ENCODE measurements at regions of chr13 and their contacts with region 1.

Region 1: GRCh38 chr13:20828539-20829364 is 55.0 kb upstream of the EEF1AKMT1 start:
- DNase-seq: peak; percentile 47
- H3K4me3 Mint-ChIP-seq: no peak overlapping the region
- H3K27ac Mint-ChIP-seq: no peak overlapping the region
- H3K4me1 Mint-ChIP-seq: peaks cover 6% of the 10 kb centered on the region
- H3K27me3 Mint-ChIP-seq: no peaks in the 10 kb centered on the region

Region 2: GRCh38 chr13:20182231-20182846 is 646.4 kb before region 1 on chr13:
- CTCF ChIA-PET with region 1: interaction called, 3 read pairs
- intact Hi-C with region 1: loop called (anchors 1 kb)
- DNase-seq: peak; percentile 54
- H3K4me3 Mint-ChIP-seq: no peak overlapping the region
- H3K27ac Mint-ChIP-seq: no peak overlapping the region
- H3K4me1 Mint-ChIP-seq: no peaks in the 10 kb centered on the region
- H3K27me3 Mint-ChIP-seq: peaks cover 30% of the 10 kb centered on the region

Region 3: DNA sequence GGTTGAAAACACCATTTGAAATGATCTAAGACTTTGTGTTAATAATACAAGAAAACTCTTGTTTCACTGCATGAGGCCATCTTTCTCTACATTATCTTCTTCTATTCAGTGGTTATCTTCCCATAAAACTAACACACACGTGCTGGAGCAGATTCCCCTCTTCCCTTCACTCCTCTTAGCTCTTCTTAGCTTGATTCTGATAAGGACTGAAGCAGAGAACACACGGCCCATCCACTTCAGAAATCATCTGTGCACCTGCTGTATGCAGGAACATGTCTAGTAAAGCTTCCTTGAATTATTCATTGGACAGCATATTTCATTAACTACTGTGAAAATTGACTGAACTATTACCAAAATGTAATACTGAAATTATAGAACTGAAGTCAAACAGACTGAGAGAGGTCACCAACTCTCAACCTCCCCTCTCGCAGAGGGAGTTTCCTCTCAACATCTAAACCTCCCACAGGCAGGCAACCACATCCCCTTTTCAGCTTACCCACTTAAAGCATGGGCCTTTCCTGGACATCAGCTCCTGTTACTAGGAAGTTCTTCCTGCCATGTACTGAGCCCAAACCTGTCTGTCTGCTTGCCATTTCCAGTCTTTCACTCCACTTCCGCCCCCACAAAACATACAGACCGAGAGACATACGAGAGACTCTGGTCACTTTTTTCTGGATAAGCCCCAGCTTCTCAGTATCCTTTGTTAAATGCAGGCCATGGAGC is 417.0 kb before region 1 on chr13:
- CTCF ChIA-PET with region 1: no interaction called
- intact Hi-C with region 1: loop called (anchors 1 kb)
- DNase-seq: peak; percentile 78
- H3K4me3 Mint-ChIP-seq: no peak overlapping the region
- H3K27ac Mint-ChIP-seq: peak overlapping the region; percentile 50
- H3K4me1 Mint-ChIP-seq: peaks cover 21% of the 10 kb centered on the region
- H3K27me3 Mint-ChIP-seq: no peaks in the 10 kb centered on the region

Region 4: DNA sequence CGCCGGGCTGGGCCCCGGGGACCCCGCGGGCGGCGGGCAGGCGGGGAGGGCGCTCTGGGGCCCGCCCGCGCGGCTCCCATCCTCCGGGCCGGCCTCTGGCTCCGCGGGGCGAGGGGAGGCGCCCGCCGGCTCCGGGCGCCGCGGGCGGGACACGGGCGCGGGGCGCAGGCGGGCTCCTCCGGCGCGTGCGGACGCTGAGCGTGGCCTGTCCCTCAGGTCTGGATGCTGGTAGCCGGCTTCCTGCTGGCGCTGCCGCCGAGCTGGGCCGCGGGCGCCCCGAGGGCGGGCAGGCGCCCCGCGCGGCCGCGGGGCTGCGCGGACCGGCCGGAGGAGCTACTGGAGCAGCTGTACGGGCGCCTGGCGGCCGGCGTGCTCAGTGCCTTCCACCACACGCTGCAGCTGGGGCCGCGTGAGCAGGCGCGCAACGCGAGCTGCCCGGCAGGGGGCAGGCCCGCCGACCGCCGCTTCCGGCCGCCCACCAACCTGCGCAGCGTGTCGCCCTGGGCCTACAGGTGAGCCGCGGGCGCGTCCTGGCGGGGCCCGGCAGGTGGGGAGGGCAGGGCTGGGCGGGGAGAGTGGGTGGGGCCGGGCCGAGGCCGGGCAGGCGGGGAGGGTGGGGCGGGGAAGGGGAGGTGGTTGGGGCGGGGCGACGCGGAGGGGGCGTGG is 124.8 kb before region 1 on chr13:
- CTCF ChIA-PET with region 1: interaction called, 8 read pairs
- intact Hi-C with region 1: loop called (anchors 1 kb)
- DNase-seq: peak; percentile 72
- H3K4me3 Mint-ChIP-seq: no peak overlapping the region
- H3K27ac Mint-ChIP-seq: no peak overlapping the region
- H3K4me1 Mint-ChIP-seq: peaks cover 5% of the 10 kb centered on the region
- H3K27me3 Mint-ChIP-seq: peaks cover 13% of the 10 kb centered on the region

Region 5: DNA sequence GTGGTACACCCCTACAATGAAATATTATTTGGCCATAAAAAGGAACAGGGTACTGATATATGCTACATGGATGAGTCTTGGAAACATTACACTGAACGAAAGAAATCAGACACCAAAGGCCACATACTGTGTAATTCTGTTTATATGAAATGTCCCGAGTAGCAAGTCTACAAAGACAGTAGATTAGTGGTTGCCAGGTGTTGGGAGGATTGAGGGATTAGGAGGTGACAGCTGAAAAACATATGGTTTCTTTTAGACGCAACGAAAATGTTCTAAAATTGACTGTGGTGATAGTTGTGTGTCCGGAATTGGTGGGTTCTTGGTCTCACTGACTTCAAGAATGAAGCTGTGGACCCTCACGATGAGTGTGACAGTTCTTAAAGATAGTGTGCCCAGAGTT is 90.1 kb before region 1 on chr13:
- CTCF ChIA-PET with region 1: no interaction called
- intact Hi-C with region 1: no loop called
- DNase-seq: no peak
- H3K4me3 Mint-ChIP-seq: no peak overlapping the region
- H3K27ac Mint-ChIP-seq: no peak overlapping the region
- H3K4me1 Mint-ChIP-seq: no peaks in the 10 kb centered on the region
- H3K27me3 Mint-ChIP-seq: no peaks in the 10 kb centered on the region

Region 6: DNA sequence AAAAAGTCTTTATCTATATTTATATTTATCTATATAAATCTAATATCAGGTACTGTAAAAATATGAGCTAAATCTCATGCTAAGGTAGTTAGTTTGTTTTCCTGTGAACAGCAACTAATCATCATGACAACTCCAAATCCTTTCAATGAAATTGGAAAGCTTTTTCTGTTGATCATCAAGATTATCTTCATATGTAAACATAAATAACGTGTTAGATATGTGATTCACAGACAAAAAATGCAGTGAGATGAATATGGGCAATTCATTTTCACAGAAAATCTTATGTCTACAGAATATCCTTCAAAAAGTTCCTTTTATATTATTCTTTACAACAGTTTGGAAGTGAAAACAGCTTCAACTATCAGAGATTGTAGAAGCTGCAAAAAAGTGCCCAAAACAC is 13.3 kb before region 1 on chr13:
- CTCF ChIA-PET with region 1: interaction called, 16 read pairs
- intact Hi-C with region 1: no loop called
- DNase-seq: no peak
- H3K4me3 Mint-ChIP-seq: no peak overlapping the region
- H3K27ac Mint-ChIP-seq: no peak overlapping the region
- H3K4me1 Mint-ChIP-seq: peaks cover under 1% of the 10 kb centered on the region
- H3K27me3 Mint-ChIP-seq: no peaks in the 10 kb centered on the region

Region 7: GRCh38 chr13:20860844-20861243 is 32.1 kb after region 1 on chr13:
- CTCF ChIA-PET with region 1: interaction called, 20 read pairs
- intact Hi-C with region 1: no loop called
- DNase-seq: no peak
- H3K4me3 Mint-ChIP-seq: no peak overlapping the region
- H3K27ac Mint-ChIP-seq: no peak overlapping the region
- H3K4me1 Mint-ChIP-seq: peaks cover 8% of the 10 kb centered on the region
- H3K27me3 Mint-ChIP-seq: no peaks in the 10 kb centered on the region

Region 8: DNA sequence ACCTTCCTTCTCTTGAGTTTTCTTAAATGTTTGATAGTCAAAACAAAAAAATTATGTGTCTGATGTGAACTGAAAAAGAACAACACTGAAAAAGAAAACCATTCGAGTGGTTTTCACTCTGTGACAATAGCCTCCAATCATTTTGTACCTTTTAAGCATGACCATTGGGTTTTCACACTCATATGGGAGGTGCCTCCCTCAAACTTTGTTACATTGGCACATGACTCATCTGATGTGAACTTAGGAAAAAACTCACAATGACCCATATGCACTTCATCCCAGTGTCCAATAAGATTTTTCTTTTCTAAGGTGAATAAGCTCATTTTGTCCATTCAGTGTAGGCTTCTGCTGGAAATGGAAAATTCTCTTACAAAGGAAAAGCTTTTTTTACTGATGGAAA is 140.4 kb after region 1 on chr13:
- CTCF ChIA-PET with region 1: no interaction called
- intact Hi-C with region 1: no loop called
- DNase-seq: no peak
- H3K4me3 Mint-ChIP-seq: no peak overlapping the region
- H3K27ac Mint-ChIP-seq: no peak overlapping the region
- H3K4me1 Mint-ChIP-seq: peaks cover 11% of the 10 kb centered on the region
- H3K27me3 Mint-ChIP-seq: no peaks in the 10 kb centered on the region

Region 9: DNA sequence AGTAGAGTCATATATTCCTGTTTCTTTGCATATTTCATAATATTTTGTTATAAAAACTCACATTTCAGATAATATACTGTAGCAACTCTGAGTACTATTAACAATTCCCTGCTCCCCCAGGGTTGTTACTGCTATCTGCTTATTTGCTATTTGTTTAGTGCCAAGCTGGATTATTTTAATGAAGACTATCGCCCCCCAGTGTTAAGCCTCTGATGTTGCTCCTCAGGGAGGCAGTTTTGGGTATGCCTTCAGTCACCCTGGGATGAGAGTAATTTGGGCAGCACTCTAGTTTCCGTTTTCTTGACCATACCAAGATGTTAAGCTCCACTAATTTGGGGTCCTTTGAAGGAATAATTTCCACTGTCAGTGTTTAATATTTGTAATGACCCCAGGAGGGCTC is 729.2 kb after region 1 on chr13:
- CTCF ChIA-PET with region 1: no interaction called
- intact Hi-C with region 1: no loop called
- DNase-seq: peak; percentile 17
- H3K4me3 Mint-ChIP-seq: no peak overlapping the region
- H3K27ac Mint-ChIP-seq: no peak overlapping the region
- H3K4me1 Mint-ChIP-seq: peaks cover 3% of the 10 kb centered on the region
- H3K27me3 Mint-ChIP-seq: no peaks in the 10 kb centered on the region

Region 10: GRCh38 chr13:21894091-21894490 is 1065.3 kb after region 1 on chr13:
- CTCF ChIA-PET with region 1: no interaction called
- intact Hi-C with region 1: no loop called
- DNase-seq: no peak
- H3K4me3 Mint-ChIP-seq: no peak overlapping the region
- H3K27ac Mint-ChIP-seq: no peak overlapping the region
- H3K4me1 Mint-ChIP-seq: no peaks in the 10 kb centered on the region
- H3K27me3 Mint-ChIP-seq: no peaks in the 10 kb centered on the region